ENCODE measurements at regions of chr12 and their contacts with region 1.

Region 1: DNA sequence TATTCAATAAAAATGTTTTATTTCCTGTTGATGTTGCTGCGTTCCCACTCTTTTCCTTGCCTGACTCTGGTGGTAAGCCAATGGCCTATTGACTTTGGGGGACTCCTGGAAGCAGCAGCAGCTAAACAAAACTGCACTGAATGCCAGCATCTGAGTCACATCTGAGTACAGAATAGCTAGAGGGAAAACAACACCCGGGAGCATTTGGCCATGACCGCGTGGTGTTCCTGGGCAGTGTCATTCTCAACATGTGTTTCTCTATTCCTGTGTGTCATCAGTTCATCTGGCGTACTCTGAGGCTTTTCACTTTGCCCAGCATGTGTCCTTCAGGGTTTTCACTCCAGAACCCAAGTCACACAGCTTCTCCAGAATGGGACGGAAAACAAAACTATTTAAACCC is 238.8 kb downstream of the PAWR start:
- DNase-seq: peak; percentile 99
- H3K4me3 ChIP-seq: no peak overlapping the region
- H3K27ac ChIP-seq: peak overlapping the region; percentile 79
- H3K4me1 ChIP-seq: peaks cover 44% of the 10 kb centered on the region
- H3K27me3 ChIP-seq: no peaks in the 10 kb centered on the region
- CTCF ChIP-seq: no peak
- POLR2A ChIP-seq: no peak

Region 2: GRCh38 chr12:79162949-79163348 is 289.0 kb before region 1 on chr12:
- CTCF ChIA-PET with region 1: no interaction called
- POLR2A ChIA-PET with region 1: no interaction called
- dilution Hi-C with region 1: no loop called
- intact Hi-C with region 1: no loop called
- DNase-seq: peak; percentile 6
- H3K4me3 ChIP-seq: no peak overlapping the region
- H3K27ac ChIP-seq: no peak overlapping the region
- H3K4me1 ChIP-seq: no peaks in the 10 kb centered on the region
- H3K27me3 ChIP-seq: no peaks in the 10 kb centered on the region
- CTCF ChIP-seq: no peak
- POLR2A ChIP-seq: no peak

Region 3: DNA sequence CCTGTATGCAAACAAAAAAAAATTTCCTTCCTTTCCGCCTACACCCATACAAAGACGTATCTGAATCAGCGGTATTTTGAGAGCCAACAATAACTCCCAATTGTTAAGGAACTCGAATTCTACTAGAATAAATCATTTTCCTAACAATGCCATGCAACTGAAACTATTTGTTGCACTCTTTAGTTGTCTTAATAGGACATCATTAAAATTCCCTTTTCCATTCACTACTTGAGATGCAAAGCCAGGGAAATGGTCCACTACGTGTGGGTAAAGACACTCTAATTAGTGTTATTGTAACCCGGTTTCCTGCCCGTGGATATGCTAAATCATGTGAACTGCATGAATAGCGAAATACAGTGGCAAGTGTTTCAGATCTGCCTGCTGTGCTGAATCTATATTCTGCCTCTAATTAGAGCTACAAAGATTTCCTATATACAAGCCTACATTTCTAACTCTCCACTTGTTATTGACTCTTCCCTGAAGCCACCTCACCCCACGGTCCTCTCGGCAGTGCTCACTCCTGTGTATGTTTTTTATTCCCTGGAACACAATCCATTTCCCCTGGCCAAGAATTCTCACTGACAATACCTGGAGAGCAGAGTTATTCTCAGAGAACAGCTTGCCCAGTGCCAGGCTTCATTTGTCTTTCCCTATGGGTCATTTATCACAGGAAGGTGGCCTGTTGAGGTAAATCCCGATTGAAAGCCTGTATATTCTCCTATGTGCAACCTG is 70.4 kb after region 1 on chr12:
- CTCF ChIA-PET with region 1: no interaction called
- POLR2A ChIA-PET with region 1: no interaction called
- dilution Hi-C with region 1: no loop called
- intact Hi-C with region 1: loop called (anchors 5 kb)
- DNase-seq: peak; percentile 82
- H3K4me3 ChIP-seq: peak overlapping the region in 1 of 3 experiments; percentile 37
- H3K27ac ChIP-seq: peak overlapping the region; percentile 62
- H3K4me1 ChIP-seq: peaks cover 32% of the 10 kb centered on the region
- H3K27me3 ChIP-seq: no peaks in the 10 kb centered on the region
- CTCF ChIP-seq: no peak
- POLR2A ChIP-seq: no peak

Region 4: DNA sequence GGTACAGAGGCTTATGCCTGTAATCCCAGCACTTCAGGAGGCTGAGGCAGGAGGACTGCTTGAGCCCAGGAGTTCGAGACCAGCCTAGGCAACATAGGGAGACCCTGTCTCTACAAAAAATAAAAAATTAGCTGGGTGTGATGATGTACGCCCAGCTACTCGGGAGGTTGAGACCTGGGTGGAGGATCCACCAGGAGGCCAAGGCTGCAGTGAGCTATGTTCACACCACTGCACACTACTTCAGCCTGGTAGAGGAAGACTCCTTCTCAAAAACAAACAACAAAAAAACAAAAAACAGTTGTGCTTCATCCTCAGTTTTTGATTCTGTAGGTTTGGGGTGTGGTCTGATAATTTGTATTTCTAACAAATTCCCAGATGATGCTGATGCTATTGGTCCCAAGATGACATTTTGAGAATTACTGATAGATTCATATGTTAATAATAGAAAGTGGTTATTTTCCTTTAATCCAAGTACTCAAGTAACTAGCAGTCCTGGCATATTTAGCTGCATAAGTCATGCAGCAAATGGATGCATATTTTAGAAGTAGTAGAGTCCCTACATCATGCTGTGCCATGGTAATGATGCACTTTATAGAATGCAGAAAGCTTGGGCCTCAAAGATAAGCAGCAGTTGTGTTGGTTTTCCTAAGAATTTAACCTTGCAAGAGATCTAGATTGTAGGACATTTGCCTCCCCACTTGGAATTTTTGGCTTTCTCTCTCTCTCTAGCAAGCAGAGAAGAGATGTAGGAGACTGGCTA is 314.9 kb after region 1 on chr12:
- CTCF ChIA-PET with region 1: no interaction called
- POLR2A ChIA-PET with region 1: no interaction called
- dilution Hi-C with region 1: no loop called
- intact Hi-C with region 1: no loop called
- DNase-seq: peak; percentile 3
- H3K4me3 ChIP-seq: no peak overlapping the region
- H3K27ac ChIP-seq: no peak overlapping the region
- H3K4me1 ChIP-seq: no peaks in the 10 kb centered on the region
- H3K27me3 ChIP-seq: no peaks in the 10 kb centered on the region
- CTCF ChIP-seq: no peak
- POLR2A ChIP-seq: no peak

Measured in endothelial cell of umbilical vein (primary cell).